Ascending aorta (tissue), 2 donors: ENCODE measurements at regions of chr19 and their contacts with region 1.

Region 1: DNA sequence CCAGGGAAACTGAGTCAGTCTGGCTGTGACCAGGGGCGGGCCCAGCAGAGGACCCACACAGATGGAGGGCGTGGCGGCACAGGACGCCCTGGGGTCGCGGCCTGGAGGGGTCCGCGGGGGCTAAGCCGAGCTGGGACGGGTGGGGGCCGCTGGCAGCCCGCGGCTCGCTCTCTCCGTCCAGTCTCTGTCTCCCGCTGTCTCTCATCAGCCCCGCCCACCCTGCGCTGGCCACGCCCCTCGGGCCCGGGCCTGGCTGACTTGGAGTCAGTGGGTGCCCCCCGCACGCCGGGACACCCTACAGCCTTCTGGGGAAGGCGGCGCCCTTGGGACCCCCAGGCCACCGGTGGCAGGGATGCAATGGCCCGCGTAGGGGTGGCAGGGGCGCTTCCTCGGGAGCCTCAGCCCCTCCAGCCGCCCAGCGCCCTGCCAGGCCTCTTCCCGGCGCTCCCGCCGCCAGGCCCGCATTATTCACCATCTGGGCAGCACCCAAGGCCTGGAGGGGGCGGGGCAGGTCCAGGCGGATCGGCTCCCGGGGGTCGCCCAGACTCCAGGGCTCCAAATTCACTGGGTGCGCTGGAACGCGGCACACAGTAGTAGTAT is at the start of gene TBXA2R:
- DNase-seq: peak; percentile 35 to 91
- H3K4me3 ChIP-seq: peak within 1 kb of the TSS; percentile 74 to 96
- H3K27ac ChIP-seq: peak within 1 kb of the TSS; percentile 94 to 99
- H3K4me1 ChIP-seq: peaks cover 47 to 68% of the 10 kb centered on the region in 2 donors
- H3K27me3 ChIP-seq: no peaks in the 10 kb centered on the region
- CTCF ChIP-seq: no peak
- total RNA-seq, gene TBXA2R: 37.8 TPM

Region 2: GRCh38 chr19:3459089-3459881 is 147.5 kb before region 1 on chr19:
- intact Hi-C with region 1: loop called (anchors 5 kb)
- DNase-seq: peak; percentile 80 to 96
- H3K4me3 ChIP-seq: peak overlapping the region in 1 of 2 donors; percentile 28
- H3K27ac ChIP-seq: peak overlapping the region; percentile 98 to 99
- H3K4me1 ChIP-seq: peaks cover 32 to 46% of the 10 kb centered on the region in 2 donors
- H3K27me3 ChIP-seq: no peaks in the 10 kb centered on the region
- CTCF ChIP-seq: no peak

Region 3: GRCh38 chr19:3494051-3494450 is 112.7 kb before region 1 on chr19:
- intact Hi-C with region 1: no loop called
- DNase-seq: no peak
- H3K4me3 ChIP-seq: no peak overlapping the region
- H3K27ac ChIP-seq: no peak overlapping the region
- H3K4me1 ChIP-seq: peaks cover 0 to under 1% of the 10 kb centered on the region in 2 donors
- H3K27me3 ChIP-seq: no peaks in the 10 kb centered on the region
- CTCF ChIP-seq: no peak

Region 4: GRCh38 chr19:3538965-3539742 is 67.6 kb before region 1 on chr19 and contains the start of gene TEKTIP1:
- intact Hi-C with region 1: no loop called
- DNase-seq: no peak
- H3K4me3 ChIP-seq: no peak within 1 kb of the TSS
- H3K27ac ChIP-seq: no peak within 1 kb of the TSS
- H3K4me1 ChIP-seq: peaks cover 3 to 8% of the 10 kb centered on the region in 2 donors
- H3K27me3 ChIP-seq: no peaks in the 10 kb centered on the region
- CTCF ChIP-seq: no peak
- total RNA-seq, gene TEKTIP1: not detected

Region 5: GRCh38 chr19:3557461-3558248 is 49.1 kb before region 1 on chr19 and contains the start of gene MFSD12:
- intact Hi-C with region 1: loop called (anchors 5 kb)
- DNase-seq: peak; percentile 70 to 96
- H3K4me3 ChIP-seq: peak within 1 kb of the TSS; percentile 63 to 90
- H3K27ac ChIP-seq: peak within 1 kb of the TSS; percentile 72 to 79
- H3K4me1 ChIP-seq: peaks cover 8 to 23% of the 10 kb centered on the region in 2 donors
- H3K27me3 ChIP-seq: no peaks in the 10 kb centered on the region
- CTCF ChIP-seq: no peak
- total RNA-seq, gene MFSD12: 133 TPM

Region 6: DNA sequence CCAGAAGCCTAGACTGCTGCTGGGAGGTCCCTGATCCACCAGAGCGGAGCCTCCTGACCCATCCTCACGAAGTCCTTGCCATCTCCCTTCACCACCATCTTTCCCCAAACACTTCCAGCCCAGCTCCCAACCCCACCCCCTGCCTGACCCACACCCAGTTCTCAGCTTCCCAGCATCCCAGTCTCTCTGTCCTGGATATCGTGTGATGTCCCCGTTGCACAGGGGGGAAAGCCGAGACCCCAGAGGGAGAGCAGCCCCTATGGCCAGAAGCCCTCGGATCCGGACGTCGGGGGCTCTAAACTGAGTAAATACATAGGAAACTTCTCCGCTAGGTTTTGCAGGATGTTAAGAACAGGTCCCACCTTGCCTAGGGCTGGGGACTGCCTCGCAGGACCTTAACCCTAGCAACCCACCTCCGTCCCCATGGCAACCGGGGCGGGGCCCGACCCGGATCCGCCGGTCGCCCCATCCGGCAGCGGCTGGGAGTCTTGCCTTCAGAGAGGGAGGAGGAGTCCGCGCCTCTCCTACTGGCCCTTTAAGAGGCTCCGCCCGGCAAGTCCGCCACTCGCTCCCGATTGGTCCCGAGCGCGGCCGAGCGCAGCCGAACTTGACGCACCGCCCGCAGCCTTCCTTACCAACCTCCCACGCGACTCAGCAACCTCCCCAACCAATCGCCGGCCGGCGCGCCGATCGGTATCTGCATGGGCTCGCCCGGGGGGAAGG is 34.5 kb before region 1 on chr19:
- intact Hi-C with region 1: loop called (anchors 2 kb)
- DNase-seq: peak; percentile 100
- H3K4me3 ChIP-seq: peak overlapping the region; percentile 89 to 92
- H3K27ac ChIP-seq: peak overlapping the region; percentile 15 to 38
- H3K4me1 ChIP-seq: peaks cover 8 to 21% of the 10 kb centered on the region in 2 donors
- H3K27me3 ChIP-seq: no peaks in the 10 kb centered on the region
- CTCF ChIP-seq: no peak

Region 7: DNA sequence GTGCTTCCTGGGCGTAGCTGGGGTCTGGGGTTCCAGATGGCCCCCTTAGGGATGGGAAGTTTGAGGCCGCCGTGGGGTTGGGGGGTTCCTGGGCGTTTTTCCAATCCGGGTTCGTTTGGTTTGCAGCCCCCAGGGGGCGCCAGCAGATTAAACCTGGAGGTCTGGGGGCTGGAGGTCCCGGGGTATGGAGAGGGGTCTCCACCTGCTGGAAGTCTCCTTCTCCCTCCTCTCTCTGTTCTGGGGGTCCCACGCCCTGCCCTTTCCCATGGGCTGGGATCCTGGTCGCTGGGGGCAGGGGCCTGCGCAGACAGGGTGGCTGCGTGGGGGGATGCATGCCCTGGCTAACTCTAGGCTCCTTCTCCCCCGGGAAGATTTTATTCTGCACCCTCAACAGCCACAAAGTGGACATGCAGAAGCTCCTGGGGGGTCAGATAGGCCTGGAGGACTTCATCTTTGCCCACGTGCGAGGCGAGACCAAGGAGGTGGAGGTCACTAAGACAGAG is 20.6 kb before region 1 on chr19:
- intact Hi-C with region 1: loop called (anchors 2 kb)
- DNase-seq: no peak
- H3K4me3 ChIP-seq: peak overlapping the region; percentile 52 to 62
- H3K27ac ChIP-seq: no peak overlapping the region
- H3K4me1 ChIP-seq: peaks cover 7 to 11% of the 10 kb centered on the region in 2 donors
- H3K27me3 ChIP-seq: no peaks in the 10 kb centered on the region
- CTCF ChIP-seq: peak; percentile 48 to 79 (median 69)

Region 8: DNA sequence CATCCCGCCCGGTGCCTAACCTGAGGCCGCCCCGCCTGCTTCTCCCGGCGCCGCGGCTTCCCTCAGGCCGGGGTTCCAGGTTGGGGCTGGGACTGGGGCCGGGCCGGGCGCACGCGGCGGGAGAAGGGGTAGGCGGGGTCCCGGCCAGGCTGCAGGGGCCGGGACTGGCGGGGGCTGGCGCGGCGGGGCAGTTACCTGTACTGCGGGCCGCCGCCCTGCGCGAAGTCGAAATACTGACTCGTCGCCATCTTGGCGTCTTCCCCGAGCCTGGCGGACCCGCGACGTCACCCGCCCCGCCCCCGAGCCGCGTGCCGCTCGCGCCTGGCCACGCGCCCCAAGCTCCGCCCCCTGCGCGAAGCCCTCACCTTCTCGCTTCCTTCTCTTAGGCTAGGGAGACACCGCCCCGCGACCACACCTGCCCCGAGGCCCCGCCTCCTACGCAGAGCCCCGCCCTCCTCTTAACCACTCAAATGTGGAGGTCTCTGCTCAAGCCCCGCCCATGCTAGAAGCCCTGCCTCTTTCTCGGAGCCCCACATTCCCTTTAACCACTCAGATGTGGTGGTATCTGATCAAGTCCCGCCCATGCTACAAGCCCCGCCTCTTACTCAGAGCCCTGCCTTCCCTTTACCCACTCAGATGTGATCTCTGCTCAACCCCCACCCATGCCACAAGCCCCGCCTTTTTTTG is 262.1 kb after region 1 on chr19 and contains the start of gene ZFR2:
- intact Hi-C with region 1: no loop called
- DNase-seq: no peak
- H3K4me3 ChIP-seq: peak within 1 kb of the TSS in 1 of 2 donors; percentile 7
- H3K27ac ChIP-seq: no peak within 1 kb of the TSS
- H3K4me1 ChIP-seq: no peaks in the 10 kb centered on the region
- H3K27me3 ChIP-seq: peaks cover 18% of the 10 kb centered on the region
- CTCF ChIP-seq: no peak
- total RNA-seq, gene ZFR2: not detected